ENCODE measurements at regions of chr11 and their contacts with region 1.

Region 1: DNA sequence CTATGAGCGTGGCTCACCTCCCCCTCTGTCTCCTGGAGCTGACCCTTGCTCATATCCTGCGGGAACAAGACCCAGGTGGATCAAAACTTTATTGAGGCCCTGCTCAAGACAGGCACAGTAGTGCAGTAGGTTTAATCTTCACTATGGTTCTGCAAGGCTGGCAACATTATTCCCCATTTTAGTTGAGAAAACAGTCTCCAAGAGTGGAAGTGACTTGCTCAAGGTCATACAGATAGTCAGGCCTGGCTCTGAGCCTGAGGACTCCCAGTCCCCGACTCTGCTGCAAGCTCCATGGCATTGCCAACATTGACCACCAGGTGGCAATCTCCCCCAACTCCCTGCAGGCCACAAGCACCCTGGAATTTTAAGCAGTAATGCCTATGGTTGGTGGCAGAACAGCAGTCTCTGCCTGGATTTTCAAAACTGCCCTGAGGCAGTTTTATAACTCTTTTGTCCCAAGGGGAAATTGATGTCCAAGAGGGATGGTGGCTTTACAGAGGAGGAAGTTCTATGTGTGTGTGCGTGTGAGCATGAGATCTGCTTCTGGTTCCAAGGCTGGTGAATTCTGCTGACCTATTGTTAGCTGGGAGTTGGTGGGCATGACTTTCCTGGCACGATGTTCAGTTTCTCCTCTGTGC is 34.1 kb downstream of the NEU3 start:
- DNase-seq: peak; percentile 73
- CTCF ChIP-seq: peak; percentile 85

Region 2: GRCh38 chr11:75142714-75143419 is 120.0 kb after region 1 on chr11:
- in situ Hi-C with region 1: no loop called
- DNase-seq: peak; percentile 65
- CTCF ChIP-seq: no peak

Region 3: GRCh38 chr11:75214411-75214821 is 191.5 kb after region 1 on chr11:
- in situ Hi-C with region 1: loop called (anchors 10 kb)
- DNase-seq: peak; percentile 74
- CTCF ChIP-seq: no peak

Region 4: GRCh38 chr11:75241036-75241905 is 218.4 kb after region 1 on chr11:
- in situ Hi-C with region 1: loop called (anchors 10 kb)
- DNase-seq: peak; percentile 97
- CTCF ChIP-seq: peak; percentile 100

Measured in GM13976 (cell line).